Cardiac septum (tissue), 1 donor: ENCODE measurements at regions of chr9 and their contacts with region 1.

Region 1: DNA sequence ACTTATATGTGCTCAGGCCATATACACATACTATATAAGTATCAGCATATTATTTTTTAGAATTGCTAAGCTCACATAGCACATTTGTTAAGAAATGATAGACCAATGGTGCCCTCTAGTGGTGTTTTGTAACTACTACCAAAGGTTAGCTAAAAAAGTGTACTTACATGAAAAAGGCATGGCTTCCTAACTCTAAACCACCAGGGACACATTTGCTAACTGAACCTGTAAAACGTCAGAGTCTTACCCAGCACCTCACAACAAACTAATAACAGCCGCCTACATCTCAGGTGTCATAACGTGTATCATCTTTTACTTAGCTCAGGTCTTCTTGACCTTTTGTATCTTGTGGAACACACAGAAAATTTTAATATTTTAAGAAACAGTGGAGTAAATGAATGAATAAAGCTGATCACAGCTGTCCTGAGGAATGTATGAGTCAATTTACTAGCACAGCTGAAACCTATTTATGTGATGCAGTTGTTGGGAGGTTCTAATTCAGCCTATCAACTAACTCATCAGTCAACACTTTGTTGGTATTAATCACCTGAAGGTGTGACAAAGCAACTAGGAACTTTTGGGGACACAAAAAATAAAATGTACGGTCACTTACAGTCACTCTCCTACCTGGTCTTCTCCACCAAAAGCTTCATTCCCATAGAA is 72.9 kb downstream of the BAAT start:
- DNase-seq: no peak

Region 2: GRCh38 chr9:100714372-100715099 is 597.4 kb before region 1 on chr9:
- intact Hi-C with region 1: loop called (anchors 5 kb)
- DNase-seq: no peak

Region 3: GRCh38 chr9:101119206-101119819 is 192.6 kb before region 1 on chr9:
- intact Hi-C with region 1: loop called (anchors 5 kb)
- DNase-seq: no peak

Region 4: GRCh38 chr9:101354765-101355708 is 43.1 kb after region 1 on chr9:
- intact Hi-C with region 1: no loop called
- DNase-seq: no peak